Ascending aorta (tissue), 2 donors: ENCODE measurements at regions of chr11 and their contacts with region 1.

Region 1: DNA sequence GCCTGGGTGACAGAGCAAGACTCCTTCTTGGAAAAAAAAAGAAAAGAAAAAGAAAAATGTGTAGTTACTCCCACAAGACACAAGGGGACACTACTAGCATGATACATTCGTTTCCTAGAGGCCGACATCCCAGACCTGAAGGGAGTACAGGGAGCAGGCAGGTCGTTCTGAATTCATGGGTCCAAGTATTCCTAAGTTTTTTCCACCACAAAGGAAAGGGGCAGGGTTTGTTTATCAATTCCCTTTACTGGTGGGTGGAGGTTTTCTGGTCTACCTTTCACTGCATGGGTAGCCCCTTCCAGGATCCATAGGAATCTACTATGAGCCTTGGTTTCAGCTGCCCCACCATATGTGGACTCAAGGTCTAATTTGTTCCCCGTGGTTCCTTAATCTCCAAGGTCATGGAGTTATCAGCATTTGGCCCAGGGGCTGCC is 11.8 kb downstream of the TIGD3 start:
- DNase-seq: no peak
- H3K4me3 ChIP-seq: no peak overlapping the region
- H3K27ac ChIP-seq: no peak overlapping the region
- H3K4me1 ChIP-seq: peaks cover 0 to 7% of the 10 kb centered on the region in 2 donors
- H3K27me3 ChIP-seq: no peaks in the 10 kb centered on the region
- CTCF ChIP-seq: peak; percentile 76 to 86 (median 82)

Region 2: DNA sequence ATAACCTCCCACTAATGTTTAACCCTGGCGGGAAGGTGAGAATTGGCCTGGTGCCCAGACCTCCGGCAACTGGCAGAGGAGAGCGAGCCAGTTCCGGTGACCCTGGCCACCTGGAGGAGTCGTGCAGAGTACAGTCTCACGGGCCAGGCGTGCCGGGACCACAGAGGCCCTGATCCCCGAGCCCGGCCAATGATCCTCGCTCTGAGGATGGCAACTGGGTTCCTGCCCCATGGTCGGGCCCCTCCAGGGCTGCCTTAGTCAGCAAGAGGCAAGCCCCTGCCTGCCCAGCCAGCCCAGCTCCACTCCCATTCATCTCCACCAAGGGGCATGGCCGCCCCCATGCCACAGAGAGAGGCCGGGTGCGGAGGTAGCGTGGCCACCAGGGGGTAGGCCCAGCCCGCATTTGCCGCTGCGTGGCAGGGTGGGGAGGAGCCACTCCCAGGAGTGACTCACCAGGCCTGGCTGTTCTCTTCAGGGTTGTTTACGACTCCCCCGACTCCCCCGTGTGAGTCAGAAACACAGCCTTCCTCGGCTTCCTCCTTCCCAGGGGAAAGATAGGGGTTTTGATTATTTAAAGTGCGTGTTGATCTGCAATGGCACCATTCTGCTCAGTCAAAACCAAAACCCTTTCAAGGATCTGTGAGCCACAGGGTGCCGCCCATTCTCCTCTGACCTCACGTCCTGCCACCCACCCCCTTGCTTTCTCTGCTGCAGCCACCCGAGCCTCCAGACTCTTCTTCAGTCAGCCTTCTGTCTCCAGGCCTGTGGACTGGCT is 15.9 kb after region 1 on chr11 and contains the start of gene SLC25A45:
- intact Hi-C with region 1: loop called (anchors 1 kb)
- DNase-seq: peak; percentile 91 to 98
- H3K4me3 ChIP-seq: peak within 1 kb of the TSS; percentile 31 to 63
- H3K27ac ChIP-seq: peak within 1 kb of the TSS; percentile 95 to 97
- H3K4me1 ChIP-seq: peaks cover 10 to 34% of the 10 kb centered on the region in 2 donors
- H3K27me3 ChIP-seq: no peaks in the 10 kb centered on the region
- CTCF ChIP-seq: peak; percentile 80 to 98 (median 88)
- total RNA-seq, gene SLC25A45: 11.4 TPM

Region 3: GRCh38 chr11:65502555-65503367 is 136.4 kb after region 1 on chr11:
- intact Hi-C with region 1: no loop called
- DNase-seq: no peak
- H3K4me3 ChIP-seq: peak overlapping the region; percentile 62 to 67
- H3K27ac ChIP-seq: peak overlapping the region; percentile 41 to 95
- H3K4me1 ChIP-seq: peaks cover 6 to 19% of the 10 kb centered on the region in 2 donors
- H3K27me3 ChIP-seq: no peaks in the 10 kb centered on the region
- CTCF ChIP-seq: no peak